Naive thymus-derived CD4-positive, alpha-beta T cell (primary cell): ENCODE measurements at regions of chr2 and their contacts with region 1.

Region 1: GRCh38 chr2:61463769-61464475 is 7.0 kb downstream of the USP34 start:
- DNase-seq: no peak
- ATAC-seq: no peak
- H3K4me3 ChIP-seq: no peak overlapping the region
- H3K4me3 Mint-ChIP-seq: peak overlapping the region in 7 of 10 donors; percentile 33 to 72 (median 43)
- H3K27ac ChIP-seq: no peak overlapping the region
- H3K27ac Mint-ChIP-seq: peak overlapping the region in 3 of 9 donors; percentile 13 to 54 (median 22)
- H3K4me1 ChIP-seq: peaks cover 30 to 35% of the 10 kb centered on the region in 2 donors
- H3K4me1 Mint-ChIP-seq: peaks cover 31 to 87% (median 58%) of the 10 kb centered on the region in 7 donors
- H3K27me3 ChIP-seq: no peaks in the 10 kb centered on the region
- H3K27me3 Mint-ChIP-seq: no peaks in the 10 kb centered on the region

Region 2: GRCh38 chr2:61255580-61256437 is 208.1 kb before region 1 on chr2:
- CTCF ChIA-PET with region 1: no interaction called
- POLR2A ChIA-PET with region 1: no interaction called
- intact Hi-C with region 1: no loop called
- DNase-seq: no peak
- ATAC-seq: peak; percentile 45
- H3K4me3 ChIP-seq: no peak overlapping the region
- H3K4me3 Mint-ChIP-seq: no peak overlapping the region
- H3K27ac ChIP-seq: no peak overlapping the region
- H3K27ac Mint-ChIP-seq: no peak overlapping the region
- H3K4me1 ChIP-seq: no peaks in the 10 kb centered on the region
- H3K4me1 Mint-ChIP-seq: peaks cover 0 to 6% (median 3%) of the 10 kb centered on the region in 7 donors
- H3K27me3 ChIP-seq: no peaks in the 10 kb centered on the region
- H3K27me3 Mint-ChIP-seq: no peaks in the 10 kb centered on the region

Region 3: GRCh38 chr2:61411109-61411508 is 52.8 kb before region 1 on chr2:
- CTCF ChIA-PET with region 1: no interaction called
- POLR2A ChIA-PET with region 1: no interaction called
- intact Hi-C with region 1: no loop called
- DNase-seq: no peak
- ATAC-seq: no peak
- H3K4me3 ChIP-seq: no peak overlapping the region
- H3K4me3 Mint-ChIP-seq: no peak overlapping the region
- H3K27ac ChIP-seq: no peak overlapping the region
- H3K27ac Mint-ChIP-seq: peak overlapping the region in 6 of 9 donors; percentile 3 to 62 (median 37)
- H3K4me1 ChIP-seq: peaks cover 0 to 2% of the 10 kb centered on the region in 2 donors
- H3K4me1 Mint-ChIP-seq: peaks cover 21 to 46% (median 36%) of the 10 kb centered on the region in 7 donors
- H3K27me3 ChIP-seq: no peaks in the 10 kb centered on the region
- H3K27me3 Mint-ChIP-seq: no peaks in the 10 kb centered on the region

Region 4: DNA sequence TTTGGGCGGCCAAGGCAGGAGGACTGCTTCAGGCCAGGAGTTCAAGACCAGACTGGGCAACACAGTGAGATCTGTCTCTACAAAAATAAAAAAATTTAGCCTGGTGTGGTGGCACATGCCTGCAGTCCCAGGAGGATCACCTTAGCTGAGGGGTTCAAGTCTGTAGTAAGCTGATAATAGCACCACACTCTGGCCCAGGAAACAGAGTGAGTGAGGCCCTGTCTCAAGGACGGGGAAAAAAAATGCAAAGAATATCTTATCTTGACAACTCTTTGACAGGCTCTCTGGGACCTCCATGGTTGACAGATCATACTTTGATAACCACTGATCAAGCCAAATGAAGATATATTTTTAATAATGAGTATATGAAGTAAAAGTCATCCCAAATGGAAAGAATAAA is 15.7 kb before region 1 on chr2:
- CTCF ChIA-PET with region 1: no interaction called
- POLR2A ChIA-PET with region 1: no interaction called
- intact Hi-C with region 1: loop called in 1 of 2 experiments (anchors 2 kb)
- DNase-seq: no peak
- ATAC-seq: no peak
- H3K4me3 ChIP-seq: no peak overlapping the region
- H3K4me3 Mint-ChIP-seq: peak overlapping the region in 1 of 10 donors; percentile 12
- H3K27ac ChIP-seq: no peak overlapping the region
- H3K27ac Mint-ChIP-seq: no peak overlapping the region
- H3K4me1 ChIP-seq: peaks cover 5 to 15% of the 10 kb centered on the region in 2 donors
- H3K4me1 Mint-ChIP-seq: peaks cover 21 to 74% (median 60%) of the 10 kb centered on the region in 7 donors
- H3K27me3 ChIP-seq: no peaks in the 10 kb centered on the region
- H3K27me3 Mint-ChIP-seq: no peaks in the 10 kb centered on the region